ENCODE measurements at regions of chr22 and their contacts with region 1.

Region 1: GRCh38 chr22:29040385-29041275 is 21.0 kb downstream of the C22orf31 start:
- DNase-seq: peak; percentile 75
- CTCF ChIP-seq: peak; percentile 87

Region 2: GRCh38 chr22:28600546-28601143 is 440.0 kb before region 1 on chr22:
- in situ Hi-C with region 1: loop called (anchors 5 kb)
- DNase-seq: peak; percentile 40
- CTCF ChIP-seq: peak; percentile 42

Region 3: DNA sequence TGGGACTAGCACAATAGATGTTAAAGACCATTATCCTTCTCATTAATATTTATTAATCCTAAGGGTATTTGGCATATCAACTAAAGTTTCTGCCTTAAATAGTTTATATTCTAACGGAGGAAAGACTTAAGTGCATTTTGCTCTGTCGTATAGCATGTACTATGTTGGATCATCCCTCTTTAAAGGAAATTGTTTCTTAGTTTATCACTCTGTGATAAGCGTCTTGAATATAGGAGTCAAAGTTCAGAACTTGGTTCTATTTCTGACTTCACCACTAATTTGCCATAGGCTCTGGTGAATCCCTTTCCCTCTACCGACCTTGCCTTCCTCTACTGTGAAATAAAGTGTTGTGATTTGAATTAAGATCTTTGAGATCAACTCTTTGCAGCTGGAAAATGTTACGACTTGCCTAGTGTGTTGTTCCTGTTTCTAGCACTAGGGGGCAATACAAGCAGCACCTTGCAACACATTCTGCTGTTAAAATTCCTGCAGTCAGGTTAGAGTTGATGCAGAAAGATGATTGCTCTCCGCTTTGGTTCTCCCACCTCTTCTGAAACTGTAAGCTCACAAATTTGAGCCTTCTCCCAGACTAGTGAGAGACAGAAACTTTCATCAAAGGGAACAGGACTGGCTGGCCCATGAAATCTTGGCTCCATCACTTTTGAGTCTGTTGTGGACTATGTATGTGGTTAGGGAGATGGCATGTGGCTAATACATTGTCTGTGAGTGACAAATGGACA is 185.1 kb before region 1 on chr22:
- in situ Hi-C with region 1: loop called (anchors 5 kb)
- DNase-seq: peak; percentile 74
- CTCF ChIP-seq: peak; percentile 89

Region 4: GRCh38 chr22:29245637-29246385 is 205.2 kb after region 1 on chr22:
- in situ Hi-C with region 1: loop called (anchors 25 kb)
- DNase-seq: peak; percentile 85
- CTCF ChIP-seq: peak; percentile 99

Measured in GM13977 (cell line).